ENCODE measurements at regions of chrX and their contacts with region 1.

Region 1: GRCh38 chrX:106170318-106170717 is 2.2 kb downstream of the PWWP3B start:
- DNase-seq: peak; percentile 46
- H3K4me3 Mint-ChIP-seq: no peak overlapping the region
- H3K27ac Mint-ChIP-seq: no peak overlapping the region
- H3K4me1 Mint-ChIP-seq: peaks cover 6% of the 10 kb centered on the region
- H3K27me3 Mint-ChIP-seq: peaks cover 29% of the 10 kb centered on the region
- CTCF ChIP-seq: peak; percentile 51

Region 2: GRCh38 chrX:105975382-105975781 is 194.9 kb before region 1 on chrX:
- CTCF ChIA-PET with region 1: no interaction called
- POLR2A ChIA-PET with region 1: no interaction called
- intact Hi-C with region 1: loop called (anchors 10 kb)
- DNase-seq: peak; percentile 48
- H3K4me3 Mint-ChIP-seq: no peak overlapping the region
- H3K27ac Mint-ChIP-seq: no peak overlapping the region
- H3K4me1 Mint-ChIP-seq: peaks cover 11% of the 10 kb centered on the region
- H3K27me3 Mint-ChIP-seq: peaks cover 65% of the 10 kb centered on the region
- CTCF ChIP-seq: peak; percentile 40

Region 3: GRCh38 chrX:106150701-106151100 is 19.6 kb before region 1 on chrX:
- CTCF ChIA-PET with region 1: no interaction called
- POLR2A ChIA-PET with region 1: no interaction called
- intact Hi-C with region 1: no loop called
- DNase-seq: no peak
- H3K4me3 Mint-ChIP-seq: no peak overlapping the region
- H3K27ac Mint-ChIP-seq: no peak overlapping the region
- H3K4me1 Mint-ChIP-seq: no peaks in the 10 kb centered on the region
- H3K27me3 Mint-ChIP-seq: peaks cover 60% of the 10 kb centered on the region
- CTCF ChIP-seq: no peak

Region 4: DNA sequence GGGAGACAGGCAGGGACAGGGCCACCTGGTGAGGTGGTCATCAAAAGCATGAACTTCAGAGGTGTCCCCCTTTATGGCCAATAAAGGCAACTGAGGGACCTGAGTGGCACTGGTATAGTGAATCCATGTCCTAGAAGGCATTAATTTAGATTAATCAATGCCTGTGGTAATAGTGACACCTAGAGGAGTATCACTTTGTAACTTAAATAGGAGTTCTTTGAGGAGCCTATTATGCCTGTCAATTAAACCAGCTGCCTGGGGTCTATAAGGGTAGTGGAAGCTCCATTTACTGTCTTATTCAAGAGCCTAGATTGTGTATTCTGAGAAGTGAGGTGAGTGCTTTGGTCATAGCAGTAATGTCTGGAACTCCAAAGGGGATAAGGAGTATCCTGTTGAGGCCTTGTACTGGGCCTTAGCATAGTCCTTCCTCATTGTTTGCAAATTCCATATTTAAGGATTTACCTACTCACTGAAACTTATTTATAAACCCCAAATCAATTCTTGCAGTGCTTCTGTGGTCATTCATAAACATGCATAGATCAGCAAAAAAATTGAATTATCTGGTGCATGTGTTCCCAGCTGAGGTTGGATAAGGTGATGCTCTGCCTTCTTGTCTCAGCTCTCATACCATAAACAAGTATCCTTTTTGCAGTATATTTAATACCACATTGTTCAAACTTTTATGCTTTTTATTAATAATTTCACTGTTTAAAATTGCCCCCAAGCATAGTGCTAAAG is 227.7 kb after region 1 on chrX:
- CTCF ChIA-PET with region 1: interaction called, 5 read pairs
- POLR2A ChIA-PET with region 1: no interaction called
- intact Hi-C with region 1: loop called (anchors 1 kb)
- DNase-seq: peak; percentile 38
- H3K4me3 Mint-ChIP-seq: no peak overlapping the region
- H3K27ac Mint-ChIP-seq: no peak overlapping the region
- H3K4me1 Mint-ChIP-seq: no peaks in the 10 kb centered on the region
- H3K27me3 Mint-ChIP-seq: peaks cover 33% of the 10 kb centered on the region
- CTCF ChIP-seq: peak; percentile 42

Region 5: DNA sequence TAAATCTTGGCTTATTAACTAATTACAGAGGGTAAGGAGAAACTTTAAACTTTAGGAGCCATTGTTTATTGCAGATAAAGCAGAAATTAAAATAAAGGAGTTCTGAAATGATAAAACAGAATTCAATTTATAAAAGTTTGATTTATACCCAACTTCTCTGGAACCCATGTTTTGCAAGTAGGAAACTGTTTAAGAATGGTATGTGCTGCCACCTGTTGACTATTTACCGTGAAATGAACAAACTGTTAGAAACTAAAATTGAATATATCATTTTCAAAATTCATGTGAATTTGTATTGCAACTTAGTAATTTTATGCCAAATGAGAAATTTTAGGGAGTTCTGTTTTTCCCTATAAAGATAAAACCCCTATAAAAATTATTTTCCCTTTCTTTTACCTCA is 621.2 kb after region 1 on chrX:
- CTCF ChIA-PET with region 1: no interaction called
- POLR2A ChIA-PET with region 1: no interaction called
- intact Hi-C with region 1: loop called (anchors 10 kb)
- DNase-seq: peak; percentile 32
- H3K4me3 Mint-ChIP-seq: no peak overlapping the region
- H3K27ac Mint-ChIP-seq: no peak overlapping the region
- H3K4me1 Mint-ChIP-seq: no peaks in the 10 kb centered on the region
- H3K27me3 Mint-ChIP-seq: peaks cover 54% of the 10 kb centered on the region
- CTCF ChIP-seq: peak; percentile 49

Measured in MCF 10A (cell line).